Activated CD8-positive, alpha-beta T cell treated with anti-CD3 and anti-CD28 coated beads, Interleukin-2, amount 10 ng/mL, durations not matched to agents 7 days and 5 days (primary cell): ENCODE measurements at regions of chr5 and their contacts with region 1.

Region 1: DNA sequence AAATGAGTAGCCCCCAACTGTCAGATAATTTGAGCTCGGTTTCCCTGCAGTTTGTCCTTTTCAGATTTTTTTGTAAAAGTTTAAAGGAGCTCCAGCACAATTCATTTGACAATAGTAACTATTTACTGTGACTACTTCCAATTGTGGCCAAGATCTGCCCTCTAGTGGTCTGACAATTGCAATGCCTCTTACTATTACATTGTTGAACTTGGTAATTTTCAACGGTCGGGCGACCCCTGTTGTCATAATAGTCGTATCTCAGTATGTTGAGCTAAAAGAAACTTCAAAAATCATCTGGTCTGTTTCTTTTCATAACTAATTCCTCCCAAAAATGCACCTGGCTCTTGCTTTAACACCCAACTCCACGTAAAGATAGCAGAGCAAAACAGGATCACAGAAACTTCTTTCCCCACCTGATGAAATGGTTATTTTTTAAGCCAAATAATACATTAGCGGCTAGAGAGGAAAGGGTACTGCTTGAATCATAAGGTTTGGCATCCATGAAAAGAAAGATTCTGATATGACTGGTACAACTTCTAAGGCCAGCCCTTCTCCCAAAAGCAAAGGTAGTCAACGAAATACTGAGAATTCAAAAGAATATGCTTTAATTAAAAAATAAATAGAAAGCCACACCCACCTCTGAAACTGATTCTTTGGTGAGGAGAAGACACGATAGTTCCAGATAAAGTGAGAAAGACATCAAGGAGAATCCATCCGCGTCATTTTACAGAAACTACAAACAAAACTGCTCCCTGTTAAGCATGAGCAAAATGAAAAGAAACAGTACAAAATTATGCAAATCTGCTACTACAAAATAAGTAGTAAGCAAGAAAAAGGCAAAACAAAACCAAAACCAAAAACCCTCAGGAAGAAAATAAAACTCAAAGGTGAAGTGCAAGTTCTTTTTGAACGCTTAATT is 76.9 kb upstream of the HTR4 start:
- DNase-seq: peak; percentile 85
- ATAC-seq: peak; percentile 98
- H3K4me3 Mint-ChIP-seq: peak overlapping the region; percentile 53
- H3K27ac Mint-ChIP-seq: peak overlapping the region; percentile 47
- H3K4me1 Mint-ChIP-seq: peaks cover 2% of the 10 kb centered on the region
- H3K27me3 Mint-ChIP-seq: peaks cover 14% of the 10 kb centered on the region

Region 2: DNA sequence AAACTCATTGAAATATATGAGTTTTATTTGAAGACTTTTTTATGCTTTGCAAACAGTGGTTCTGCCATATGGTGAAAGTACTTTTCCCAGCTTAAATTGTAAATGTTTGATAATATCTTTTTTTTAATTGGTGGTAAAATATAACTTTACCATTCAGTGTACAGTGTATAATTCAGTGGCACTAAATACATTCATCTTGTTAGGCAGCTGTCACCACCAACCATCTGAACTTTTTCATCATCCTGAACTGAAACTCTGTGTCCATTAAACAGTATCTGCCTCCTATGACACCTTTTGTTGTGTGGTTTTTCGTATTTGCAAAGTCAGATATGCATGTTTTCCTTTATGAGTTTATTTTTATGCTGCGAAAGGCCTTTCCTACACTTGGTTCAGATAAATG is 302.4 kb before region 1 on chr5:
- CTCF ChIA-PET with region 1: interaction called, 10 read pairs
- POLR2A ChIA-PET with region 1: no interaction called
- DNase-seq: no peak
- ATAC-seq: no peak
- H3K4me3 Mint-ChIP-seq: no peak overlapping the region
- H3K27ac Mint-ChIP-seq: no peak overlapping the region
- H3K4me1 Mint-ChIP-seq: peaks cover 2% of the 10 kb centered on the region
- H3K27me3 Mint-ChIP-seq: no peaks in the 10 kb centered on the region

Region 3: GRCh38 chr5:148482691-148483462 is 248.3 kb before region 1 on chr5:
- CTCF ChIA-PET with region 1: interaction called, 23 read pairs
- POLR2A ChIA-PET with region 1: no interaction called
- DNase-seq: peak; percentile 71
- ATAC-seq: peak; percentile 80
- H3K4me3 Mint-ChIP-seq: no peak overlapping the region
- H3K27ac Mint-ChIP-seq: no peak overlapping the region
- H3K4me1 Mint-ChIP-seq: no peaks in the 10 kb centered on the region
- H3K27me3 Mint-ChIP-seq: peaks cover 7% of the 10 kb centered on the region

Region 4: GRCh38 chr5:148791334-148791667 is 60.1 kb after region 1 on chr5:
- CTCF ChIA-PET with region 1: interaction called, 18 read pairs
- POLR2A ChIA-PET with region 1: no interaction called
- DNase-seq: peak; percentile 32
- ATAC-seq: peak; percentile 57
- H3K4me3 Mint-ChIP-seq: no peak overlapping the region
- H3K27ac Mint-ChIP-seq: no peak overlapping the region
- H3K4me1 Mint-ChIP-seq: peaks cover 26% of the 10 kb centered on the region
- H3K27me3 Mint-ChIP-seq: peaks cover 18% of the 10 kb centered on the region

Region 5: DNA sequence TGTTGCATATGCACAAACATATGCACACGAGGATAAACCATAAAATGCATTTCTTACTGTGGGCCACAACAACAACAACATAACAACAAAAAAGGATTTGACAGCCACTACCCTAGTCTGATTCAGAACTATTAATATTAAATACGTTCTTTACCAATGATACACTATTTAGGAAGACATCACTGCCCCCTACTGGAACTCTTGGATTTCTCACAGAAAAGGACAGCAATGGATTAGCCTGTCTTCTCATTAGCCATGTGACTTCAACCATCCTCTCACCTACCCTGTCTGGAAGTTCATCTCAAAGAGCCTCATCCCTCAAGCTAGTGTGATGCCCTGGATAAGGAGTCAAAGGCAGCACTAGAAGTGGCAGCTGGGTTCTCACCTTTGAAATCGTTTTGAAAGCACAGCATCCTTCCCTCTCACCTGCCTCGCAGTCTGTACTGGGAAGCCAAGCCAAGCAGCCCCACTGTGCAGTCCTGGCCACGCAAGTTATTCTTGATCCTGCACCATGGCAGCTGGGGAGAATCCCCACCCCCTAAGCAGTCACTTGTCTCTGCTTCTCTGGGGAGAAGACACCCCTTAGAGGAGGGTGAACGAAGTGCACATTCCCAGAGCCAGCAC is 267.1 kb after region 1 on chr5:
- CTCF ChIA-PET with region 1: interaction called, 94 read pairs
- POLR2A ChIA-PET with region 1: no interaction called
- DNase-seq: peak; percentile 51
- ATAC-seq: peak; percentile 51
- H3K4me3 Mint-ChIP-seq: no peak overlapping the region
- H3K27ac Mint-ChIP-seq: no peak overlapping the region
- H3K4me1 Mint-ChIP-seq: no peaks in the 10 kb centered on the region
- H3K27me3 Mint-ChIP-seq: peaks cover 31% of the 10 kb centered on the region

Region 6: DNA sequence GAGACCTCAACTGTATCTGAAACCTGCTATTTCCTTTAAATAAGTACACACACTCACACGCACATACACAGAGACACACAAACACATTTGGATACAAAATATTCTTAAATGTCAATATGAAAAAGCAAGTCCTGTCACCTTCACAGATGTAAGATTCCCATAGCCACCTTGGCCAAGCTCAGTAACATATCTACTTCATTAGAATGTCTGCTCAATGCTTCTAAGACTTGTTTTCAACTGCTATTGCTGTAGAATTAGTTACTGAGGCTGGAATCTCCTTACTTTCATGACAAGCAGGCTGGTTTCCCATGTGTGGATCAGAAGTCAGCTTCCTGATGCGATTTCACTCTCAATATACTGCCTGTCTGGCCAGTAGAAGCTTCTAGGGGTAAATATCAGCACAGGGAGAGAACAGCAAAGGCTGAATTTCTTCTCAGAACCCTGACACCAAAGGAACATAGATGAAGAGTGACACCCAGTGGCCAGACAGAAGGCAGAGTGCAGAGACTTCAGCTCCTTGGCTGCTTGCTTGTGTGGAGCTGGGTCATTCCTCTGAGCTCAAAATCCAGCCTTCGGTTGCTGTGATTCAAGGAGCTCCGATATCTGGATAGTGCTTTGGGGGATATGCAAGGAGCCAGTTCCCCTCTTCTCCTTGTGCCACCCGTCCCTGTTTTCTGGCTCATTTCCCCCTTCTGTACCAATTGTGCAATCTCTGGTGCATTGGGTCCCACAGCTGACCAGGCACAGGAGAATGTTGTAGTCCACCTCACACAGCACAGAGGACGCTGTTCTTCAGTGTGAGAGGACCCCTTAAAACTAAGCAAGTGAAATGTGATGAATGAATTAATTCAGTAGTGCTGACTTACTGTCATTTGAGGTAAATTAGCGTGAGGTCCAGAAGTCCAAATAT is 383.5 kb after region 1 on chr5:
- CTCF ChIA-PET with region 1: interaction called, 17 read pairs
- POLR2A ChIA-PET with region 1: no interaction called
- DNase-seq: peak; percentile 54
- ATAC-seq: peak; percentile 86
- H3K4me3 Mint-ChIP-seq: no peak overlapping the region
- H3K27ac Mint-ChIP-seq: no peak overlapping the region
- H3K4me1 Mint-ChIP-seq: no peaks in the 10 kb centered on the region
- H3K27me3 Mint-ChIP-seq: peaks cover 15% of the 10 kb centered on the region